Activated T-helper 1 cell treated with anti-CD3 and anti-CD28 coated beads, Interleukin-12 subunit alpha, Interleukin-12 subunit beta, Interleukin-2, Interleukin-4 antibody, amounts not matched to agents 30 ng/mL and 10 ng/mL and 1 ng/mL, durations not matched to agents 14 hours and 24 hours and 36 hours (primary cell): ENCODE measurements at regions of chr1 and their contacts with region 1.

Region 1: DNA sequence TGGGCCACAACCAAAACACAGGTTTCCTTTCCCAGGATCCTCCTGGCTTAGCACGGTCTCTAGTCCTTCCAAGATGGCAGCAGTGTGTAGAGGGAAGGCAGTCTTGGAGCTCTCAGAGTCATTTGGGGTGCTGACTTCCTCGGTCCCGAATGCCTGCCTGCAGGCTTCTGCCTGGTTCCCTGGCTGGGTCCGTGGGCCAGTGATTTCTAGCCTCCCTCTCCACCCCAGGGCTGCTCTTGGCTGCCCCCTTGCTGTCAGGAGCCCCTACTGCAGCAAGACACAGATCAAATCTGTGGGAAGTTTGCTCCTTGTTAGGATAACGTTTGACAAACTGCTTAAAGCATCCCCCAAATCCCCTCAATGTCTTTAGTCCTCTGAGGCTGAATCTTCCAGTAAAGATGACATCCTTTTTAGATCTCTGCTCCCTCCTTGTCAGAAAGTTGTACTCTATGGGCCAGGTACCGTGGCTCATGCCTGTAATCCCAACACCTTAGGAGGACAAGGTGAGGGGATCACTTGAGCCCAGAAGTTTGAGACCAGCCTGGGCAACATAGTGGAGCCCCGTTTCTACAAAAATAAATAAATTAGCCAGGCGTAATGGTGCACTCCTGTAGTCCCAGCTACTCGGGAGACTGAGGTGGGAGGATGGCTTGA is 272.5 kb downstream of the RRAGC start:
- DNase-seq: peak; percentile 22
- H3K4me3 Mint-ChIP-seq: no peak overlapping the region
- H3K27ac Mint-ChIP-seq: no peak overlapping the region
- H3K4me1 Mint-ChIP-seq: peaks cover 11% of the 10 kb centered on the region
- H3K27me3 Mint-ChIP-seq: peaks cover 16% of the 10 kb centered on the region

Region 2: GRCh38 chr1:38046884-38047602 is 540.1 kb before region 1 on chr1:
- intact Hi-C with region 1: loop called (anchors 5 kb)
- DNase-seq: peak; percentile 60
- H3K4me3 Mint-ChIP-seq: peak overlapping the region; percentile 84
- H3K27ac Mint-ChIP-seq: no peak overlapping the region
- H3K4me1 Mint-ChIP-seq: no peaks in the 10 kb centered on the region
- H3K27me3 Mint-ChIP-seq: peaks cover 43% of the 10 kb centered on the region

Region 3: GRCh38 chr1:38173157-38173831 is 413.8 kb before region 1 on chr1:
- intact Hi-C with region 1: no loop called
- DNase-seq: no peak
- H3K4me3 Mint-ChIP-seq: no peak overlapping the region
- H3K27ac Mint-ChIP-seq: no peak overlapping the region
- H3K4me1 Mint-ChIP-seq: no peaks in the 10 kb centered on the region
- H3K27me3 Mint-ChIP-seq: no peaks in the 10 kb centered on the region

Region 4: GRCh38 chr1:38489844-38490270 is 97.3 kb before region 1 on chr1:
- intact Hi-C with region 1: loop called (anchors 1 kb)
- DNase-seq: no peak
- H3K4me3 Mint-ChIP-seq: no peak overlapping the region
- H3K27ac Mint-ChIP-seq: no peak overlapping the region
- H3K4me1 Mint-ChIP-seq: no peaks in the 10 kb centered on the region
- H3K27me3 Mint-ChIP-seq: peaks cover 9% of the 10 kb centered on the region

Region 5: DNA sequence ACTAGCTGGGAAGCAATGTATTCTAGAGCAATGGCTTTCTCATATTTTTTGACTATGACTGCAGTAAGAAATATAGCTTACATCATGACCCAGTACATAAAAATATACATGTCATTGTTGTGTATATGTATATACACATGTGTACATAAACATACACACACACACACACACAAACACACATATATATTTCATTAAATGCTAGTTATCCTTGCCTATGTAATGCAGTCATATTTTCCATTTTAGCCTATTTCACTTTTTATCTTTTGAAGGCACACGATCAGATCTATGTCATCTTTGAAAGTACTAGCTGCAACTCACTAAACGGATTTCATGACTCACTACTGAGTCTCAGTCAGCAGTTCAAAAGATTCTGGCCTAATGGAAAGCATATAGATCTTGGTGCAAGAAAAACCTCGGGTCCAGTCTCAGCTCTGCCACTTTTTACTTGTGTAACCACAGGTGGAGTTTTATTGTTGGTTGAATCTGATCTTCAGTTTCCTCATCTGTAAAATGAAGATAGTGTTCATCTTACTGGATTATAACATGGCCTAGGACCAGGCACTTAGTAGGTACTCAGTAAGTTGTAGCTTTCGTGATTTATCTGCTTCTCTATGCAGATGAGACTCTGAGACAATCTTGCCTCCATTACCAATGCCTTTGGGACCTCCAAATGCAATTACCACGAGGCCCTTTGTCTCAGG is 53.2 kb before region 1 on chr1:
- intact Hi-C with region 1: loop called (anchors 1 kb)
- DNase-seq: no peak
- H3K4me3 Mint-ChIP-seq: no peak overlapping the region
- H3K27ac Mint-ChIP-seq: peak overlapping the region; percentile 59
- H3K4me1 Mint-ChIP-seq: peaks cover 9% of the 10 kb centered on the region
- H3K27me3 Mint-ChIP-seq: peaks cover 10% of the 10 kb centered on the region

Region 6: GRCh38 chr1:38834937-38835827 is 248.1 kb after region 1 on chr1:
- intact Hi-C with region 1: loop called (anchors 10 kb)
- DNase-seq: peak; percentile 34
- H3K4me3 Mint-ChIP-seq: no peak overlapping the region
- H3K27ac Mint-ChIP-seq: no peak overlapping the region
- H3K4me1 Mint-ChIP-seq: peaks cover 7% of the 10 kb centered on the region
- H3K27me3 Mint-ChIP-seq: peaks cover 16% of the 10 kb centered on the region